Activated CD4-positive, alpha-beta T cell treated with anti-CD3 and anti-CD28 coated beads, Interleukin-2, amount 10 ng/mL, durations not matched to agents 7 days and 5 days (primary cell): ENCODE measurements at regions of chr12 and their contacts with region 1.

Region 1: GRCh38 chr12:49322708-49323523 is at the start of gene TROAP:
- DNase-seq: peak; percentile 99
- H3K4me3 Mint-ChIP-seq: peak within 1 kb of the TSS; percentile 97
- H3K27ac Mint-ChIP-seq: peak within 1 kb of the TSS; percentile 93
- H3K4me1 Mint-ChIP-seq: peaks cover 32% of the 10 kb centered on the region
- H3K27me3 Mint-ChIP-seq: no peaks in the 10 kb centered on the region
- total RNA-seq, gene TROAP: 111 to 115 TPM

Region 2: DNA sequence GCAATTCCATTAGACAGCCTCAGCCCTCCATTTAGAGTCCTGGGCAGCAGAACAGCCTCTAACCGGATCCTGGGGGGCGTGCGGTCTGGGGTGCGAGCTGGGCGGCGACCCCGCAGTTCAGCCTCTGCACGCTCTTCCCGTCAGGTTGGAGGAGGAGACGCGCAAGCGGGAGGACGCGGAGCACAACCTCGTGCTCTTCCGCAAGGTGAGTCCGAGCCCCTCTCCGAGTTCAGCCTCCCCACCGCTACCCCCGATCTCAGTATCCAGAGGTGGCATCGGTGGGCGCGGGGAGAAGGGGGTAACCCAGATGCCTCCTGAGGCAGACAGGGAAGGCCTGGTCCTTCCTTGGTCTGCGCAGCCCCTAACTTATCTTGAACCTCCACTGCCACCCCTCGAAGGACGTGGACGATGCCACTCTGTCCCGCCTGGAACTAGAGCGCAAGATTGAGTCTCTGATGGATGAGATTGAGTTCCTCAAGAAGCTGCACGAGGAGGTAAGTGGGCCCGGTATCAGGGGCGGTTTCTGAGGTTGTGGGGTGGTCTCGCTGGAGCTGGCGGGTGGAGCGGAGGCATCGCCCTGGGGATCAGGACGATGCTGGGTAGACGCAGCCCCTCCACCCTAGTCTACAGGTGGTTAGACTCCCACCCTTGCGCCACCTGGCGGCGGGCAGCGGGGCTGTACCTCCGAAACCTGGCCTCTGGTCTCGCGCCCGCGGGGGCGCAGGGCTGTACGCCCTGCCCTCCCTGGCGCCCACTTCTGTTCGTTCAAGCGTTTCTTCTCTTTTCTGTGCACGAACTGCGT is 26.7 kb before region 1 on chr12:
- CTCF ChIA-PET with region 1: interaction called, 10 read pairs
- POLR2A ChIA-PET with region 1: no interaction called
- DNase-seq: peak; percentile 61
- H3K4me3 Mint-ChIP-seq: peak overlapping the region; percentile 56
- H3K27ac Mint-ChIP-seq: no peak overlapping the region
- H3K4me1 Mint-ChIP-seq: peaks cover 29% of the 10 kb centered on the region
- H3K27me3 Mint-ChIP-seq: peaks cover 53% of the 10 kb centered on the region

Region 3: DNA sequence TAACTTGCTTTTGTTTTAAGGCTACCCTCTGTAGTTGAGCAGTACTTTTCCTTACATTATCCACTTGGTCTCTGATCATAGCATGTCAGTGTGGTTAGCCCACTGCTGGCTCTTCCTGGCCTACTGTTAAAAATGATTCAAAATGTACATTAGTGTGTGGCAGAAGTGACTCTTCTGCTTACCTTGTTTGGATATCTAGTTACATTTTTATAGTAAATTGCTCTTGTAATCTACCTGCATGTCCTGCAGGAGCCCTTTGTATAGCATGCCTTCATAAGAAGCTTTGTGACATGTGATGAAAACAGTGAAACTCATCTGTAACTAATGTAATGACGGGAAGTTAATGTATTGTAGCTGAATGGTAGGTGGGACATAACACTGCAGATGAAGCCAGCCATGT is 52.5 kb after region 1 on chr12:
- CTCF ChIA-PET with region 1: no interaction called
- POLR2A ChIA-PET with region 1: no interaction called
- DNase-seq: no peak
- H3K4me3 Mint-ChIP-seq: no peak overlapping the region
- H3K27ac Mint-ChIP-seq: no peak overlapping the region
- H3K4me1 Mint-ChIP-seq: peaks cover 22% of the 10 kb centered on the region
- H3K27me3 Mint-ChIP-seq: no peaks in the 10 kb centered on the region

Region 4: DNA sequence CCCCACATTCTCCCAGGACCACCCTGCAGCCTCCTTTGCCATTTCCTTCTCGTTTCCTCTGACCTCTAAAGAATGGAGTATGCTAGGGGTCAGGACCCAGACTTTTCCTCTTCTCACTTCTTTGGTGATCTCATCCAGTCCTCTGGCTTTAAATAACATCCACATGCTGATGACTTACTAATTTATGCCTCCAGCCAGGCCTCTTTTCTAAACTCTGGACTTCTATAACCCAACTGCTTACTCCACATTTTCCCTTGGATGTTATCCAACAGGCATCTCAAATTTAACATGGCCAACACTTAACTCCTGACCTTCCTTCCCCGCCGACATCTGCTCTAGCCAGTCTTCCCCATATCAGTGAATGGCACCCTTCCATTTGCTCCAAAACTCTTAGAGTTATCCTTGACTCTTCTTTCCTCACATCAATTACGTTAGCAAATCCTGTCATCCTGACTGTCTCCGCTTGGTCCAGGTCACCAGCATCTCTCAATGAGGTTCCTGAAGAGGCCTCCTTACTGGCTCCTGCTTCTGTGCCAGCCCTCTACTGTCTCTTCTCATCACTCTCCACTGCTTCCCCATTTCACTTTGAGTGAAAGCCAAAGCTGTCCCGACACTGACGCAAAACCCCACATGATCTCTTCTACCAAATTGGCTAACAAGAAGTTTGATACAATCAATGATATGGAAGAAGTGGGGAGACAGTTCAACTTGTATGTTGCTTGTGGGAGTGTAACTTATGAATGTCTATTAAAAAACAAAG is 461.2 kb after region 1 on chr12:
- CTCF ChIA-PET with region 1: no interaction called
- POLR2A ChIA-PET with region 1: no interaction called
- DNase-seq: no peak
- H3K4me3 Mint-ChIP-seq: no peak overlapping the region
- H3K27ac Mint-ChIP-seq: no peak overlapping the region
- H3K4me1 Mint-ChIP-seq: no peaks in the 10 kb centered on the region
- H3K27me3 Mint-ChIP-seq: peaks cover 37% of the 10 kb centered on the region